Activated B cell treated with CpG ODN at 0.5 μM for 24 hours (primary cell): ENCODE measurements at regions of chr6 and their contacts with region 1.

Region 1: DNA sequence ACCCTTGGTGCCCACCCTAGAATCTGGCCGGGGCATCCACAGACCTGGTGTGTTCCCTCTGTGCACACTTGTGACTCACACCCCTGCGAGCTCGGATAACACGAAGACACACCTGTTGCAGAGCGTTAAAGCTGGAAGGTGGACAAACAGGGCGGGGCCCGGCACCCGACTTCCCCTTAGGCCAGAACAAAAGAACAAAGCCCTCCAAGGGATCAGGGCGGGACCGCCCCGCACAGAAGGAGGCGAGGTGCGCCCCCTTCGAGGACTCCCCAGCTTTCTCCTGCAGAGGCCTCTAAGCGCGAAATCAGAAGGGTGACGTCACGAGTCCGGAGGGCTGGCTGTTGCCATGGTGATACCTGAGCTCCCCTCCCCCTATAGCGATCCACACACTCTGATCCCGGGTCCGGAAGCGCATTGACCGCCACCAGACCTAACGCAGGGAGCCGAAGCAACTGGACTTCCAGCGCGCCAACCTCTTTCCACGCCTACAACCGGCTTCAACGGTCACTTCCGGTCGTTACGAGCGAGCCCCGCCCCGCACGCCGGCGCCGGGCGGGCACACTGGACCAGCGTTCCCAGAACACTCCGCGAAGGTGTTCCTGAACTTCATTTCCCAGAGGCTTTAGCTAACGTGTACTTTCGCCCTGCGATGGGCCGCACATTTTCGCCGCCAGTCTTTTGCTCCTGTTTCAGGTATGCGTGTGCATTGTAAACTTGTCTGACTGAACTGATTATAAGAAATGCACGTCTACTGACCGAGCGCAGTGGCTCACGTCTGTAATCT is at the start of gene ZNF184:
- DNase-seq: peak; percentile 85
- ATAC-seq: peak; percentile 92
- H3K4me3 Mint-ChIP-seq: peak within 1 kb of the TSS; percentile 95
- H3K27ac Mint-ChIP-seq: peak within 1 kb of the TSS; percentile 95
- H3K4me1 Mint-ChIP-seq: peaks cover 34% of the 10 kb centered on the region
- H3K27me3 Mint-ChIP-seq: no peaks in the 10 kb centered on the region
- CTCF ChIP-seq: no peak
- total RNA-seq, gene ZNF184: 8.1 and 8.6 TPM in 2 replicates

Region 2: DNA sequence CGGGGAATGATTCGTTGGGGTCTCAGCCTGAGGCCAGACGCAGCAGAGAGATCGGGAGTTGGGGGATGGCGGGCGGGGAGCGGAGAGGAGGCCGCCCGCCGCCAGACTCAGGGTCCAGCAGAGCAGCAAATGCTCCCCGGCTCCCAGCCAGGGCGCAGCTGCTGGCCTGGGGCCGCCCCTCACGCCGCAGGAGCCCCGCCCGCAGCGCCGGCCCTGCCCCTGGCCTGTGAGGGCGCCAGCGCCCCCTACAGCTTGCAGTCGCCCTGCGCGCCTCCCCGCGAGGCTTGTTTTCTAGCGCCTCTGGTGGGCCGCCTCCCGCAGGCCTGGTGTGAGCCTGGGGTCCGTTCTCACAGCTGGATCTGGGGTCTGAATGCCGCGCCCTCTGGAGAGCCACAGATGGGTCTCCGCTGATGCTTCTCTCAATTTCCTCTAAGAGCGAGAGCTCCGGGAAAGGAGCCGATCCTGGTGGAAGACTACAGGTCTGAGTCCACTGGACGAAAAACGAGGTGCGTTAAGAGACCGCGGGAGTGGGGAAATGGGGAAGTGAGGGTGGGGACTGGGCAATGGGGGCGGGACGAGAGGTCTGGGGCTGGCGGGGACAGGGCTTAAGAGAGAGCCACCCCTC is 1480.3 kb before region 1 on chr6:
- CTCF ChIA-PET with region 1: no interaction called
- POLR2A ChIA-PET with region 1: interaction called, 15 read pairs
- intact Hi-C with region 1: loop called (anchors 10 kb)
- DNase-seq: peak; percentile 99
- ATAC-seq: peak; percentile 89
- H3K4me3 Mint-ChIP-seq: peak overlapping the region; percentile 99
- H3K27ac Mint-ChIP-seq: peak overlapping the region; percentile 99
- H3K4me1 Mint-ChIP-seq: peaks cover 50% of the 10 kb centered on the region
- H3K27me3 Mint-ChIP-seq: no peaks in the 10 kb centered on the region
- CTCF ChIP-seq: peak; percentile 73

Region 3: DNA sequence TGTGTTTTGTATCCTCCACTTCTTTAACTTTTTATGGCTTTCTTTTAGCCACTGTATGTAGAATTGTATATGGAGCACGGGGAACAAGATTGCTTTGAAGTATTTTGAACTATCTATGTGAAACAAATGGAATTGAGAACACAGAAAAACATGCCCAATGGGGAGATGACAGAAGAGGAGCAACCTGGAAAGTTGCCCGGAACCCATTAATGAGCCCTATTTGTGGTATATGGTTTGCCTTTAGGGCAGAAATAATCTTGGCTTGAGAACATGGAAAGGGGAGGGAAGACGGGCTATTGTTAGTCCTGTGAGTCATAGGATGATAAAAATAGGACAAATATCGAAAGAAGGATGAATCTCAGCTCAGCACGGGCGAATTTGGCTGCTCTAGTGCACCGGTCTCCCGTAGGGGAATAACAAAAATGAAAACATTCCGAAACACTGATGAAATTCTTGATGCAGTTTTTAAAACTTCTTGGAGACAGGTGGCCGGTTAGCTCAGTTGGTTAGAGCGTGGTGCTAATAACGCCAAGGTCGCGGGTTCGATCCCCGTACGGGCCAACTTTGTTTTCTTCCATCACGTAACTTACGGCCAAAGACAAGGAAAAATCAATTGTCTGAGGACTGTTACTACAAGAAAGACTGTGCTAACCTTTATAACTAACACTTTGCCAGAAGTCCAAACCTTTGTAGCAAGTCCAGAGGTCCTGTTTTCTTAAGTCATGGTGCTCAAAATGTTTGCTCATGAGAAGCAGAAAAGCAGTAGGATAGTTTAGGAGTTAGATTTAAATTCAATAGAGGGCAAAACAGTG is 919.0 kb before region 1 on chr6:
- CTCF ChIA-PET with region 1: no interaction called
- POLR2A ChIA-PET with region 1: no interaction called
- intact Hi-C with region 1: loop called (anchors 10 kb)
- DNase-seq: peak; percentile 67
- ATAC-seq: peak; percentile 46
- H3K4me3 Mint-ChIP-seq: no peak overlapping the region
- H3K27ac Mint-ChIP-seq: no peak overlapping the region
- H3K4me1 Mint-ChIP-seq: peaks cover 28% of the 10 kb centered on the region
- H3K27me3 Mint-ChIP-seq: no peaks in the 10 kb centered on the region
- CTCF ChIP-seq: no peak

Region 4: DNA sequence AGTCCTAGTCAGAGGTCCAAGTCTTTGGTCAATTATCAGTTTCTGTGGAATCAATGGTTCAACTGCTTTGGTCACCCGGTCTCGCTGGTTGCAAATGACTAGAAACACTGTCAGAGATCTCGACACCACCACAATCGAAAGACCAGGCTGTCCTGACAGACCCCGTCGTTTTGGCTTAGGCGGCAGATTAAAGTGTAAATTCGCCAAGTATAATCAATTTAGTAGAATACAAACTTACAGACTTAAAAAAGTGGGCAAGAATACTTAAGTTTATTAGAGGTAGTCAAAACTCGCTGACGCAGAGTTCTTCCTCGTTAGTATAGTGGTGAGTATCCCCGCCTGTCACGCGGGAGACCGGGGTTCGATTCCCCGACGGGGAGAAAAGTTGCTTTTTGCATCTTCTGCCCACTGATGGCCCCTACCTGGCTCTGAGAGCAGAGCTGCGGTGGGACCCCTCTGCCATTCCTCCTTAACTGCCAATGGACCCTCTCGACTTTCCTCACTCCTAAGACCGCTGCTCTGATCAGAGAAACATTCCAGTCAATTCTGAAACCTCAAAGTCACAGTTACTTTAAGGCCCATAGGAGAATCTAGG is 30.7 kb after region 1 on chr6:
- CTCF ChIA-PET with region 1: no interaction called
- POLR2A ChIA-PET with region 1: interaction called, 8 read pairs
- intact Hi-C with region 1: loop called (anchors 1 kb)
- DNase-seq: peak; percentile 61
- ATAC-seq: peak; percentile 39
- H3K4me3 Mint-ChIP-seq: peak overlapping the region; percentile 87
- H3K27ac Mint-ChIP-seq: peak overlapping the region; percentile 77
- H3K4me1 Mint-ChIP-seq: peaks cover 35% of the 10 kb centered on the region
- H3K27me3 Mint-ChIP-seq: peaks cover 12% of the 10 kb centered on the region
- CTCF ChIP-seq: no peak

Region 5: GRCh38 chr6:27871924-27872638 is 399.3 kb after region 1 on chr6:
- CTCF ChIA-PET with region 1: no interaction called
- POLR2A ChIA-PET with region 1: interaction called, 10 read pairs
- intact Hi-C with region 1: no loop called
- DNase-seq: peak; percentile 73
- ATAC-seq: peak; percentile 80
- H3K4me3 Mint-ChIP-seq: peak overlapping the region; percentile 94
- H3K27ac Mint-ChIP-seq: peak overlapping the region; percentile 95
- H3K4me1 Mint-ChIP-seq: peaks cover 36% of the 10 kb centered on the region
- H3K27me3 Mint-ChIP-seq: no peaks in the 10 kb centered on the region
- CTCF ChIP-seq: no peak

Region 6: GRCh38 chr6:28863604-28864320 is 1391.0 kb after region 1 on chr6:
- CTCF ChIA-PET with region 1: no interaction called
- POLR2A ChIA-PET with region 1: no interaction called
- intact Hi-C with region 1: loop called (anchors 10 kb)
- DNase-seq: peak; percentile 54
- ATAC-seq: peak; percentile 30
- H3K4me3 Mint-ChIP-seq: peak overlapping the region; percentile 85
- H3K27ac Mint-ChIP-seq: peak overlapping the region; percentile 90
- H3K4me1 Mint-ChIP-seq: peaks cover 27% of the 10 kb centered on the region
- H3K27me3 Mint-ChIP-seq: peaks cover 4% of the 10 kb centered on the region
- CTCF ChIP-seq: no peak